Activated CD8-positive, alpha-beta T cell treated with anti-CD3 and anti-CD28 coated beads for 36 hours (primary cell): ENCODE measurements at regions of chr10 and their contacts with region 1.

Region 1: DNA sequence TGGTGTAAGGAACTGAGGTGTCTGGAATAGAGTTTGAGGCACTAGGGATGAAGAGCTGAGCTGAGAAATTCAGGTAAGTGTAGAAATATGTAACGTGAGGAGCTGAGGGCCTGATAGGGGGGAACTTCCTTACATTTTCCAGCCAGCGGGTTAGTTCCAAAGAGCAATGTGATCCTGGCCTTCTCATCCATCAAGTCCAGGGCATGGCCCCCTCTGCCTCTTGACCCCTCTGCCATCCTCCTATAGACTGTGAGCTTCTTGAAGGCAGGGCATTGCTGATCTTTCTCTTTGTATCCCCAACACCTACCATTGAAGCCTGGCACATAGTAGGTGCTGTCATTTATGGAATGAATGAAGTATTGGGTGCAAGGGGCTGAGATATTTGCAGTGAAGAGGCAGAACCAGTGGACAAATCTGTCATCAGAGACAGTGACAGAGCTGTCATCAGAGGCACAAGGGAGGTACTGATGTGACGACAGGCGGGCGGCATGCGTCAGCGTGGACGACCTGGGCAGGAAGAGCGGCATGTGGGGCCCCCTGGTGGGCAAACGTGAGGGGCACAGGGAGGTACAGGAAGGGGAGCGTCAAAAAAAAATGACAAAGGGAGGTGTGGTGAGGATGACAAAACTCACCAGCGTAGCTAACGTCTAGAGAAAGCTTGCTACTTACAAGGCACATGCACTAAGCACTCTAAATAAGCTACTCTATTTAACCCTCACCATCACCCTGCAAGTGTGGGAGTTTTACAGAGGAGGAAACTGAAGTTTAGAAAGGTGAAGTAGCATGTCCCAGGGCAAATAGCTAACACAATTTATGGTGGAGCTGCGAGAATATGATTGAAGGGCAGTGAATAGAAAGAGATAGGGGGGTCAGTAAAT is 5.2 kb upstream of the CAMK2G start:
- DNase-seq: peak; percentile 98
- ATAC-seq: peak; percentile 89
- H3K4me3 Mint-ChIP-seq: no peak overlapping the region
- H3K27ac Mint-ChIP-seq: peak overlapping the region; percentile 43
- H3K4me1 Mint-ChIP-seq: peaks cover 39% of the 10 kb centered on the region
- H3K27me3 Mint-ChIP-seq: no peaks in the 10 kb centered on the region
- CTCF ChIP-seq: peak; percentile 89

Region 2: GRCh38 chr10:73339436-73339835 is 540.1 kb before region 1 on chr10:
- CTCF ChIA-PET with region 1: no interaction called
- POLR2A ChIA-PET with region 1: no interaction called
- intact Hi-C with region 1: no loop called
- DNase-seq: no peak
- ATAC-seq: no peak
- H3K4me3 Mint-ChIP-seq: no peak overlapping the region
- H3K27ac Mint-ChIP-seq: no peak overlapping the region
- H3K4me1 Mint-ChIP-seq: no peaks in the 10 kb centered on the region
- H3K27me3 Mint-ChIP-seq: no peaks in the 10 kb centered on the region
- CTCF ChIP-seq: no peak

Region 3: GRCh38 chr10:73772280-73773151 is 107.0 kb before region 1 on chr10:
- CTCF ChIA-PET with region 1: interaction called, 11 read pairs
- POLR2A ChIA-PET with region 1: interaction called, 4 read pairs
- intact Hi-C with region 1: no loop called
- DNase-seq: peak; percentile 84
- ATAC-seq: peak; percentile 75
- H3K4me3 Mint-ChIP-seq: peak overlapping the region; percentile 89
- H3K27ac Mint-ChIP-seq: peak overlapping the region; percentile 95
- H3K4me1 Mint-ChIP-seq: peaks cover 38% of the 10 kb centered on the region
- H3K27me3 Mint-ChIP-seq: no peaks in the 10 kb centered on the region
- CTCF ChIP-seq: no peak

Region 4: DNA sequence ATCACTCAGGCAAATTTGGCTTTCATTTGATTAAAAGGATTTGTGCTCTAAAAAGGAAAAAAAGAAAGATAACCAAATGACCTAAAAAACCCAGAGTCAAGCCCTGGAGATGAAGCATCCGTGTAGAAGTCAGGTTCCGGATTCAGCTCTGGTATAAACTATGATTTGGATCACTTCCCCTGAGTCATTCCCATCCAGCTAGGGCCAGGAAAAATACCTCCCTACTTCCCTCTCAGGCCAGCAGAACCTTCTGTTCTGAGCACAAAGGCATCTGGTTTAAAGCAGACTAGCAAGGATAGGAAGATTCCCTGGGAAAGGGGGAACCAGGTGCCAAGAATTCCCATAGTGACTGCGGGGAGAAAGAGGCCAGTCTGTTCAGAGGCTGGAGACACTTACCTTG is 42.5 kb before region 1 on chr10:
- CTCF ChIA-PET with region 1: interaction called, 430 read pairs
- POLR2A ChIA-PET with region 1: no interaction called
- intact Hi-C with region 1: no loop called
- DNase-seq: no peak
- ATAC-seq: no peak
- H3K4me3 Mint-ChIP-seq: no peak overlapping the region
- H3K27ac Mint-ChIP-seq: no peak overlapping the region
- H3K4me1 Mint-ChIP-seq: no peaks in the 10 kb centered on the region
- H3K27me3 Mint-ChIP-seq: no peaks in the 10 kb centered on the region
- CTCF ChIP-seq: no peak

Region 5: DNA sequence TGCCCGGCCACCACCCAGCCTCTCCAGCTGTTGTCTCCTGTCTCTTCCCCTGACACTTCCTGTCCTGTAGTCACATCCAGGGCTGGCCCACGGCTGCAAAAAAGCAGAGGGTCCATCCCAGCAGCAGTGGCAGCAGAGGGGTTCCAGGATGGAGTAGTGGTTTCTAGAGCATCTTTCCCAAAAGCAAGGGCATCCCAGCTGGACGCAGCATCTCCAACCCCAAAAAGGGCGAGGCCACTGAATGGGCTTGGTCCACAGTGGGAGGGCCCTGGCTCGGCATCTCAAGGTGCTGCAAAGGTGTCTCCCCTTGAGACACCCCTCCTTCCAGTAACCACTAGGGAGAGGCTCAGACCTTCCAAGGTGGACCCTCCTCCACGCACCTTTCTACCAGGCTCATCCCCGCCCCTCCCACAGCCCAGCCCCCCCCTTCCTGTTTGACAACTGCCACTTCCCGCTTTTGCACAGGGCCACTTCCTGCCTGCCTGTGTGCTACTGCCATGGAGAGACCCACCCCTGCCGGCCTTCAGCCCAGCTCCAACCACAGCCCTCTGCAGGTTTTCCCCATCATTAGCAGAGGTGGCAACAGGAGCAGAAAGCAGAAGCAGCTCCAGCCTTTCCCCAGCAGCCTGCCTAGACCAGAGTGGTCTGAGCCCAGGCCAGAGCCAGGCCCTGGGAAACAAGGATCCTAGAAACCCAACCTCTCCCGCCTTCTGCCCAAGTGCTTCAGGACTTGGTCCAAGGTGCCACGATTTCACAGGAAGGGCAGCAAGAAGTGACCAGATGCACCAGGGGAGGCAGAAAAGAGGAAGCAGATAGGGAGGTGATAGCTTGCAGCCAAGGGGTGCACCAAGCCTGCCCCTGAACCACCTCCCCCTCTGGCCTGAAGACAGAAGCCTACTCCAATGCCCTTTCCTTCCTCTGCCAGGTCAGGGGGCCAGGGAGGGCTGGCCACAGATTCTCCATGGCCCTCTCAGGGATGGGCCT is 13.8 kb before region 1 on chr10:
- CTCF ChIA-PET with region 1: interaction called, 67 read pairs
- POLR2A ChIA-PET with region 1: interaction called, 32 read pairs
- intact Hi-C with region 1: no loop called
- DNase-seq: peak; percentile 64
- ATAC-seq: peak; percentile 84
- H3K4me3 Mint-ChIP-seq: peak overlapping the region; percentile 76
- H3K27ac Mint-ChIP-seq: peak overlapping the region; percentile 99
- H3K4me1 Mint-ChIP-seq: peaks cover 69% of the 10 kb centered on the region
- H3K27me3 Mint-ChIP-seq: no peaks in the 10 kb centered on the region
- CTCF ChIP-seq: no peak

Region 6: GRCh38 chr10:73940634-73941221 is 61.2 kb after region 1 on chr10:
- CTCF ChIA-PET with region 1: interaction called, 126 read pairs
- POLR2A ChIA-PET with region 1: interaction called, 5 read pairs
- intact Hi-C with region 1: no loop called
- DNase-seq: peak; percentile 88
- ATAC-seq: peak; percentile 99
- H3K4me3 Mint-ChIP-seq: no peak overlapping the region
- H3K27ac Mint-ChIP-seq: no peak overlapping the region
- H3K4me1 Mint-ChIP-seq: peaks cover 5% of the 10 kb centered on the region
- H3K27me3 Mint-ChIP-seq: peaks cover 9% of the 10 kb centered on the region
- CTCF ChIP-seq: peak; percentile 99

Region 7: DNA sequence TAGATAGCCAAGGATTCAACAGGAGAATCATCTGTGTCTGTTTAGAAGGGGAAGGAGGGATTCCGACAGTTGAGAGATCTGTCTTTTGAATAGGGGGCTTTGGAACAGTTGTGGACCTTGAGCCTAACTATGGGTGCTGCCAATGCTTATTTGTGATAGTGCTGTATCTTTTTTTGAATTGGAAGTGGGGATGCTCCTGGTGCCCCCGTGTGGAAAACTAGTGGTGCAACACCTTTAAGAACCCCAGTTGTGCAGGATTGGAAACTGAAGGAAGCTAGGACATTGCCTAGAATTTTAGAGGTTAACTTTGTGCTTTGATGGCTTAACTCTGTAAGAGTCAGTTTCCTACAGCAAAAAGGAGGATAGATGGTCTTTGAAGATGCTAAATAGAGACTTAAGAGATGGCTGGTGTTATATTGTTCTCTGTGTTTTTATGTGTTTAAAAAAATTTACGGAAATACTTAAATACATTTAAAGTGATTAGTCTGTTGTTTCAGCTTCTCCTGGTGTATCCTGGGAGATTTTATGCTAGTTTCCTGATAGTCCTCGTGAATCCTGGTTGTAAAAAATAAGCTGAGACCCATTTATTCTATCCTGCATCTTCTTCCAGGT is 201.8 kb after region 1 on chr10:
- CTCF ChIA-PET with region 1: interaction called, 14 read pairs
- POLR2A ChIA-PET with region 1: no interaction called
- intact Hi-C with region 1: no loop called
- DNase-seq: peak; percentile 56
- ATAC-seq: peak; percentile 37
- H3K4me3 Mint-ChIP-seq: no peak overlapping the region
- H3K27ac Mint-ChIP-seq: no peak overlapping the region
- H3K4me1 Mint-ChIP-seq: peaks cover 40% of the 10 kb centered on the region
- H3K27me3 Mint-ChIP-seq: no peaks in the 10 kb centered on the region
- CTCF ChIP-seq: peak; percentile 71